ENCODE measurements at regions of chr17 and their contacts with region 1.

Region 1: GRCh38 chr17:18946531-18946930 is 5.4 kb upstream of the SLC5A10 start:
- DNase-seq: no peak
- ATAC-seq: no peak
- H3K4me3 ChIP-seq: no peak overlapping the region
- H3K27ac ChIP-seq: no peak overlapping the region
- H3K4me1 ChIP-seq: peaks cover 0 to 23% (median 9%) of the 10 kb centered on the region in 9 donors
- H3K27me3 ChIP-seq: peaks cover 0 to 5% (median 0%) of the 10 kb centered on the region in 7 donors
- CTCF ChIP-seq: no peak

Region 2: DNA sequence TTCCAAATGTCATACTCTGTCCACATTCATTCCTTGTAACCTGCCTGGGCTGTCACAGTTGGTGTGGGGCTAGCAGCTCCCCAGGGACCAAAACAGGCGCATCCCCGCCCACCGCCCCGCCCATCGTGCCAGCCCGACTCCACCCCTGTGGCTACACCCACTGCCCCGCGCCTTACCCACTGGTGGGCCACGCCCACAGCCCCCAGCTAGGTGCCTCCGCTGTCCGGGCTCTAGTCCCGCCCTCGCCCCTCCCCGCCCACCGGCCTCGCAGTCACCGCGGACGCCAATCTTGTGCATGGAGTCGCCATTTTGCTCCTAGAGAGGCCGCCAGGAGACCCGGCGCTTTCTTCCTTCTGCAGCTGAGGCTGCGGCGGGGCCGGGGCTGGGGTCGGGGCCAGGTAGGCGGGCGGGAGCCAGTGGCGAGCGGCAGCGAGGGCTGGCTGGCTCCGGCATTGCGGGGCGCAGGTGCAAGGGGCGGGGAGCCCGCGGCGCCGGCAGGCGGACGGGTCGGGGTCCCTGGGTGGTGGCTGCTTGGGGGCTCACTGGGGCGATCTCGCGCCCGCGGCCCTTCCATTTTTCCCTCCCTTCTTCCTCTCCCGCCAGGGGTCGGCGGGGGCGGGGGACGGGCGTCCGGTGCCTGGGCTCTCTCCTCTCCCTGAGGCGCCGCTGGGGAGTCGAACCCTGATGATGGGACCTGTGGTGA is 88.5 kb before region 1 on chr17 and contains the start of gene PRPSAP2:
- intact Hi-C with region 1: loop called in 1 of 10 experiments (anchors 10 kb)
- DNase-seq: peak; percentile 95
- ATAC-seq: peak; percentile 92 to 97 (median 96)
- H3K4me3 ChIP-seq: peak within 1 kb of the TSS; percentile 79 to 99 (median 96)
- H3K27ac ChIP-seq: peak within 1 kb of the TSS; percentile 92 to 97 (median 96)
- H3K4me1 ChIP-seq: peaks cover 0 to 50% (median 30%) of the 10 kb centered on the region in 9 donors
- H3K27me3 ChIP-seq: no peaks in the 10 kb centered on the region
- CTCF ChIP-seq: no peak
- total RNA-seq, gene PRPSAP2: 12.8 to 23.2 (median 16.2) TPM

Region 3: DNA sequence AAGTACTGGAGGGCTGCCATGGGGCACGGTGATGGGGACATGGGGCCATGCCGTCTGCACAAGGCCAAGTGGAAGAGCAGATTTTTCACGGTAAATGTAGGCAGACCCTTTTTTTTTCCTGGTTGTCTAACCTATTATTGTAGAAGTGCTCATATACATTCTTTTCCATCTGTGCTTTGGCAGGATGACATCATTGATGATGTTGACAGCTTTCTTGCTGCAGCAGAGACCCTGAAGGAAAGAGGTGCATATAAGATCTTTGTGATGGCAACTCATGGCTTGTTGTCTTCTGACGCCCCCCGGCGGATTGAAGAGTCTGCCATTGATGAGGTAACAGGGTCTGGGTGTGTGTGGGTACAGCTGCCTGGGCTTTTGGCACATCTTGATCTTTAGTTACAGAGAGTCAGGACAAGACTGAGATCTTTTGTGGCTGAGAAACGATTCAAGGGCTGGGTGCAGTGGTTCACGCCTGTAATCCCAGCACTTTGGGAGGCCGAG is 17.9 kb before region 1 on chr17:
- intact Hi-C with region 1: no loop called
- DNase-seq: no peak
- ATAC-seq: no peak
- H3K4me3 ChIP-seq: no peak overlapping the region
- H3K27ac ChIP-seq: no peak overlapping the region
- H3K4me1 ChIP-seq: peaks cover 0 to under 1% (median 0%) of the 10 kb centered on the region in 9 donors
- H3K27me3 ChIP-seq: no peaks in the 10 kb centered on the region
- CTCF ChIP-seq: no peak

Measured in heart right ventricle (tissue), 16 donors.